GM13976 (cell line): ENCODE measurements at regions of chr5 and their contacts with region 1.

Region 1: GRCh38 chr5:176959051-176959450 is 47.5 kb downstream of the UIMC1 start:
- DNase-seq: peak; percentile 53
- CTCF ChIP-seq: no peak

Region 2: DNA sequence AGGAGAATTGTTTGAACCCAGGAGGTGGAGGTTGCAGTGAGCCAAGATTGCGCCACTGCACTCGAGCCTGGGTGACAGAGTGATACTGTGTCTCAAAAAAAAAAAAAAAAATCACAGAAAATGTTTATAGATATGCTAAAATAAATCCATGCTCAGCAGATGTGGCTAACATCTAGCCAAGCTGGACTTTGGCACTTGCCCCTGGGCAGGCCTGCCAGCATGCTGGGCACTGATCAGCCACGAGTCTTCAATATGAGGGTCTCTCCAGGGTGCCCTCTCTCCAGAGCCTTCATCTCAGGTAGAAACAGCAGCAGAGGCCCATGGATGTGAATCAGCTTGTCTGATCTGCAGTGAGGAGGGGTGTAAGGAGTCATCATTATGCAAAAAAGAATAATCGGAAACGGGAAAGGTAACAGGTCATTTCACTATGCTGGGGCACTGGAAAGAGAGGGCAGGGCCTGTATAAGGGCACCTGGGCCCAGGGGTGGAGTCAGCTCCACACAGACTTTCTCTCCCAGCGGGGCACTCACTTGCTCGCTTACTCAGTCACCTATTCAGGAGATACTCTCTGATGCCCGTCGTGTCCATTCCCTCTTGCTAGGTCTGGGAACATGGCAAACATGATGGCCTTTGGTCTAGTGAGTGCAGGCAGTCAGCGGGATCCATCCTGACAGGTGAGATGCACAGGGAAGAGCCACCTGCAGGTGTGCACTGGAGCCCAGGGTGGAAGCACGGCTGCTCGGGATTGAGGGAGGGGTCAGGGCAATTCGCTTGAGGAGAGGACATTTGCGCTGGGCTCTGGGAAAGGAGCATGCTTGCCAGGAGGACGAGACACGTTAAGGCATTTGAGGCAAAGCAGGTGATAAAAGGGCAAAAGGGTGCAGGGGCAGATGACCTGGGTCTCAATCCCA is 439.0 kb before region 1 on chr5:
- in situ Hi-C with region 1: no loop called
- DNase-seq: no peak
- CTCF ChIP-seq: no peak

Region 3: GRCh38 chr5:176660860-176661641 is 298.0 kb before region 1 on chr5:
- in situ Hi-C with region 1: loop called (anchors 25 kb)
- DNase-seq: peak; percentile 96
- CTCF ChIP-seq: peak; percentile 96

Region 4: DNA sequence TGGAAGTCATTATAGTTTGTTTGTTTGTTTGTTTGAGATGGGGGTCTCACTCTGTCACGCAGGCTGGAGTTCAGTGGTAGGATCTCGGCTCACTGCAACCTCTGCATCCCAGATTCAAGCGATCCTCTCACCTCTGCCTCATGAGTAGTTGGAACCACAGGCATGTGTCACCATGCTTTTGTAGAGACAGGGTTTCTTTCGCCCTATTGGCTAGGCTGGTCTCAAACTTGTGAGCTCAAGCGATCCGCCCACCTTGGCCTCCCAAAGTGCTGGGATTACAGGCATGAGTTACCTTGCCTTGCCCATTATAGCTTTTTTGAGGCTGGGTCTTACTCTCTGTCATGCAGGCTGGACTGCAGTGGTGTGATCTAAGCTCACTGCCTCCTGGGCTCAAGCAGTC is 203.3 kb after region 1 on chr5:
- in situ Hi-C with region 1: no loop called
- DNase-seq: no peak
- CTCF ChIP-seq: no peak